ENCODE measurements at regions of chr1 and their contacts with region 1.

Region 1: GRCh38 chr1:25616095-25616986 is at the start of gene MAN1C1:
- DNase-seq: peak; percentile 91
- H3K4me3 ChIP-seq: peak within 1 kb of the TSS; percentile 89
- H3K27ac ChIP-seq: peak within 1 kb of the TSS; percentile 35
- H3K4me1 ChIP-seq: peaks cover 60% of the 10 kb centered on the region
- CTCF ChIP-seq: peak; percentile 47
- total RNA-seq, gene MAN1C1: 2.4 and 3.0 TPM in 2 replicates

Region 2: DNA sequence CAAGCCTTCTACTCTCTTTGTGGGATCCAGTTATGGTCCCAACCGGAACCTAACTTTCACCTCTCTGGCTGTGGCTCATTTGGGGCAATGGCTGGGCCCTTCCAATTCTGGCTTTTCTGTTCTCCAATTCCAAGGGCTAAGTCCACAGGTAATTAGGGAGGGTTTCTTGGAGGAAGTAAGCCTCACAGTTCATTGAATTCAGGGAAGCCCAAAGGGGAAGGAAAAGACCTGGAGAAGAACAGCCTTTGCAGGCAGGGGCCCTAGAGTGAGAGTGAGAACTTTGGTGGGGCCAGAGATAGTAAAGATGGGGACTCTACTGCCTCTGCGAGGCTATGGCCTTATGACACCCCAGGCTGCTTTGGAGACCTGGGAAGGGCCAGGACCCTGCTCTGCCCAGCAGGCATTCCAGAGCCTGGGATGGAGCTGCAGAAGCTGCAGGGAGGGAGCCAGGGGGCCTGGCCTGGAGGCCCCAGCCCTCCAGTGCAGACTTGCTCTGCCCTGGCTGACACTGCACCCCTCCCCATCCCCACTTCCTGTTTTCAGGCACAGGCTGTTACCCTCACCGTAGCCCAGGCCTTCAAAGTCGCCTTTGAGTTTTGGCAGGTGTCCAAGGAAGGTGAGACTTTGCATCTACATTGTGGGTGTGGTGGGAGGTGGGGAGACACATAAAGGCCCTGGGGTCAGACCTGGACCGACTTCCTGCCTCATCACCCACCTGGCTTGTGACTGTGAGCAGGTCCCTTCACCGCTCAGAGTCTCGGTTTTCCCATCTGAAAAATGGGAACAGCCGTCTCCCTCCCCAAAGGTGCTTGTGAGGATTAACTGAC is 54.0 kb before region 1 on chr1:
- CTCF ChIA-PET with region 1: no interaction called
- POLR2A ChIA-PET with region 1: interaction called, 3 read pairs
- intact Hi-C with region 1: loop called (anchors 5 kb)
- DNase-seq: peak; percentile 98
- H3K4me3 ChIP-seq: peak overlapping the region; percentile 64
- H3K27ac ChIP-seq: peak overlapping the region; percentile 85
- H3K4me1 ChIP-seq: peaks cover 86% of the 10 kb centered on the region
- CTCF ChIP-seq: no peak

Region 3: GRCh38 chr1:25631750-25632485 is 15.6 kb after region 1 on chr1:
- CTCF ChIA-PET with region 1: no interaction called
- POLR2A ChIA-PET with region 1: no interaction called
- intact Hi-C with region 1: no loop called
- DNase-seq: no peak
- H3K4me3 ChIP-seq: no peak overlapping the region
- H3K27ac ChIP-seq: no peak overlapping the region
- H3K4me1 ChIP-seq: peaks cover 10% of the 10 kb centered on the region
- CTCF ChIP-seq: no peak

Region 4: DNA sequence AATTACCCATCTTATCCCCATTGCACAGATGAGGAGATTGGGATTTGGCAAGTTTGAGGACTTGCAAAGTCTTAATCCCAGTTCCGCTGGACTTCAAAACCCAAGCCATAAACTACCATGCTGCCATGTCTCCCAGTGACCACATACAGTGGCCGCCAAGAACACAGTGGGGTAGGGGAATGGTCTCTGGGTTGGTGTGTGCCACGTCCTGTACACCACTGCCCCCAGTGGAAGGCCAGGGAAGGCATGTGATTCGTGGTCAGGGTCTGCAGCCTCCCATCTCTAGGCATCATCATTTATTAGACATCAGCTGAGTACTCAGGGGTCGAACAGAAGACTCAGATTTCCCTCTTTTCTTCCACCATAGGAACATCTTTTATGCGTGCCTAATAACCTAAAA is 76.2 kb after region 1 on chr1:
- CTCF ChIA-PET with region 1: no interaction called
- POLR2A ChIA-PET with region 1: no interaction called
- intact Hi-C with region 1: loop called (anchors 2 kb)
- DNase-seq: peak; percentile 46
- H3K4me3 ChIP-seq: no peak overlapping the region
- H3K27ac ChIP-seq: no peak overlapping the region
- H3K4me1 ChIP-seq: no peaks in the 10 kb centered on the region
- CTCF ChIP-seq: peak; percentile 84

Region 5: DNA sequence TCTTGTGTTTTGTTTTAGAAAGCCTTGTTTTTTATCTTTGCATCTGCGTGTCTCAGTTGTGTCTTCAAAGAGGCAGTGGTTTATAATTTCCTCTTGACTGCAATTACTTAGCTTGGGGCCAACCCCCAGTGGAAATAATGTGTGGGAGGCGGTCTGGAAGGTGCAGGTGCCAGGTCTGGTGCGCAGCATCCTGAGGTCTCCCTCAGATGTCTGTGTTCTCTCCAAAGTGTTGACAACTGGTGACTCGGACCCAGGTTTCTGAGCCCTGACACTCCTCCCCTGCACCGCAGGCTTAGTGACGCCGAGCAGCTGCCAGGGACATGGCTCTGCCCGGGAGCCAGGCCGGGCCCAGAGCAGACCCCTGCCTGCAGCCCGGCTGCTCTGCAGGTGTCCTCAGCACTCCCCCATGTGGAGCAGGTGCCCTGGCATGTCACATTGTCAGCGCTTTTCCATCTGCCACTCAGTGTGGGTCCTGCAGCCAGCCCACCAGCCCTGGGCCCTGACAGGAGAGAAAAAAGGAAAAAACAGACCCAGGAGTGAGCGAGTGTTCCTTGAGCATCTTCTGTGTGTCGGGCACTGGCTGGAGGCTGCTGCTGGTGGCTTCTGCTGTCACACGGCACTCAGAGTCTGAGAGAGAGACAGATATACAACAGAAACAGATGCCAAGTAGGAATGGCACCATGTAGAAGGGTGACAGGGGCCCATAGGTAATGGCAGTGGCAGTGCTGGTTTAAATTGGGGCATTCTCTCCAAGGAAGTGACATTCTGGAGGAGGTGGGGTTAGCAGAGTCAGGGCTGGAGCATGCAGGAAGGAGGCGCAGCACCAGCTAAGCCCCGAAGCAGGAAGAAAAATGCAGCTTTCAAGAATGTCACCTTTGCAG is 158.8 kb after region 1 on chr1:
- CTCF ChIA-PET with region 1: no interaction called
- POLR2A ChIA-PET with region 1: no interaction called
- intact Hi-C with region 1: loop called (anchors 5 kb)
- DNase-seq: peak; percentile 80
- H3K4me3 ChIP-seq: peak overlapping the region; percentile 14
- H3K27ac ChIP-seq: peak overlapping the region; percentile 67
- H3K4me1 ChIP-seq: peaks cover 54% of the 10 kb centered on the region
- CTCF ChIP-seq: peak; percentile 50

Region 6: DNA sequence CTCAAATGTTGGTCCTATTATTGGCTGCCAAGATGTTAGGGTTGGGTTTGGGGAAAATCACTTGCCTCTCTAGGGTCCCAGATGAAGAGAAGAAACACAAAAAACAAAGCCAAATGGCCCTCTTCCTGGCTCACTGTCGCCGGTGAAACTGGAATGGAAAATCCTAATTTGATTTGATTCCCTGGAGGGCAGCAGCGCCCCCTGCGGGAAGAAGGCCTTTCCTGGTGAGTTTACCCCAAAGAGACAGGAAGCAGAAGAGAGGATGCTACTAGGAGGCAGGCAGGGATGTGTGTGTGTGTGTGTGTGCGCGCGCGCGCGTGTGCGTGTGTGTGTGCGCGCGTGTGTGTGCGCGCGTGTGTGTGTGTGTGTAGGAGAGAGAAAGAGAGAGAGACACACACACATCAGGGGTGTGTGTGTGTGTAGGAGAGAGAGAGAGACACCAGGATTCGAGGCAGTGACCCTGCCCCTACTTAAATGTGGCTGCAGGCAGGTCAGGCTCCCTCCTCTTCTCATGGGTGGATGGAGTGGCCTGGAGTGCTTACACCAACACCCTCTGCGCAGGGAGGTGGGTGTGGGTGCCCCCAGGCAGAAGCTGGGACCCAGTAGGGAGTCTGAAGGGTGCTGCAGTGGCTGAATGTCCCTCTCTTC is 180.6 kb after region 1 on chr1:
- CTCF ChIA-PET with region 1: no interaction called
- POLR2A ChIA-PET with region 1: no interaction called
- intact Hi-C with region 1: loop called (anchors 2 kb)
- DNase-seq: peak; percentile 83
- H3K4me3 ChIP-seq: no peak overlapping the region
- H3K27ac ChIP-seq: no peak overlapping the region
- H3K4me1 ChIP-seq: peaks cover 32% of the 10 kb centered on the region
- CTCF ChIP-seq: peak; percentile 84

Region 7: GRCh38 chr1:25810341-25811299 is 194.3 kb after region 1 on chr1:
- CTCF ChIA-PET with region 1: no interaction called
- POLR2A ChIA-PET with region 1: no interaction called
- intact Hi-C with region 1: loop called (anchors 5 kb)
- DNase-seq: peak; percentile 76
- H3K4me3 ChIP-seq: no peak overlapping the region
- H3K27ac ChIP-seq: peak overlapping the region; percentile 43
- H3K4me1 ChIP-seq: peaks cover 21% of the 10 kb centered on the region
- CTCF ChIP-seq: peak; percentile 94

Measured in OCI-LY7 (cell line).